ENCODE measurements at regions of chr11 and their contacts with region 1.

Region 1: GRCh38 chr11:57324886-57325734 is at the start of gene TNKS1BP1:
- DNase-seq: peak; percentile 82 to 93 (median 88)
- H3K4me3 ChIP-seq: peak within 1 kb of the TSS; percentile 94
- H3K4me3 Mint-ChIP-seq: peak within 1 kb of the TSS; percentile 88 to 98 (median 94)
- H3K27ac ChIP-seq: peak within 1 kb of the TSS; percentile 89
- H3K27ac Mint-ChIP-seq: peak within 1 kb of the TSS; percentile 92 to 99 (median 97)
- H3K4me1 ChIP-seq: peaks cover 21% of the 10 kb centered on the region
- H3K4me1 Mint-ChIP-seq: peaks cover 31 to 53% (median 45%) of the 10 kb centered on the region in 3 donors
- H3K27me3 ChIP-seq: no peaks in the 10 kb centered on the region
- H3K27me3 Mint-ChIP-seq: peaks cover 0 to 3% of the 10 kb centered on the region in 2 donors
- total RNA-seq, gene TNKS1BP1: 8.7 to 9.6 TPM

Region 2: GRCh38 chr11:57162179-57162898 is 162.8 kb before region 1 on chr11:
- CTCF ChIA-PET with region 1: no interaction called
- POLR2A ChIA-PET with region 1: interaction called, 12 read pairs
- DNase-seq: no peak
- H3K4me3 ChIP-seq: no peak overlapping the region
- H3K4me3 Mint-ChIP-seq: no peak overlapping the region
- H3K27ac ChIP-seq: no peak overlapping the region
- H3K27ac Mint-ChIP-seq: no peak overlapping the region
- H3K4me1 ChIP-seq: no peaks in the 10 kb centered on the region
- H3K4me1 Mint-ChIP-seq: no peaks in the 10 kb centered on the region
- H3K27me3 ChIP-seq: no peaks in the 10 kb centered on the region
- H3K27me3 Mint-ChIP-seq: peaks cover 7 to 15% of the 10 kb centered on the region in 2 donors

Region 3: DNA sequence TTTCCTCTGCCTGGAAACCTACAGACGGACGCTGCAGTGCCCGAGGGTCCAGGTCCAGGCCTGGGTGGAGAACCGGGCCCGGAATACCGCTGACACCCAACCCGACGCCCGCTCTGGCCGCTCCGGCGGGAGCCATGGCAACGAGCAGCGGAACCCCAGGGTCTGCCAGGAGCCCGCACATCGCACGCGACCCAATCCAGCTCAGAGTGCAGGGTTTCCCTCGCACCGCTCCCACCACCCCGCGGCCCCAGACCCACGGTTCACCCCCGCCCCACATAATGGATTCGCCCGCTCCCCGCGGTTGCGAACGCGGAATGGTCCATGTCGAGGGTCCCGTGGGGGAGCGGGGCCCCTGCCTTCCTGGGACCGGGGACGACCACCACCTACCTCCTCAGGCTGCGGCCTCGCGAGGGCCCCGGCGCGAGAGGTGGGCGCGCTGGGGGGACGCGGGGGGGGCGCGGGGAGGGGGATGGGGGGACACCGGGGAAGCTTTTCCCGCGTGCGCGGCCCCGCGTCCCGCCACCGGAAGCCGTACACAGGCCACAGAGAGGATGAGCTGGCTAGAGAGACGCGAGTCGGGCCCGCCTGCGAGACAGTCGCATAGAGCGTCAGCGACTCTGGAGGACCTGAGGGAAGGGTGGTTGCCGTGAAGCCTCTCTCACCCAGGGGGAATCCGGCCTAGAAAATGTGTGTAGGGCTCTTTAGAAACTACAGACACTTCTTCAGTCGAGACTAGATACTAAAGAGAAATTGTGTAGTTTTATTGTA is 10.4 kb after region 1 on chr11 and contains the start of gene SSRP1:
- CTCF ChIA-PET with region 1: interaction called, 20 read pairs
- POLR2A ChIA-PET with region 1: interaction called, 46 read pairs
- DNase-seq: peak; percentile 78 to 92 (median 86)
- H3K4me3 ChIP-seq: peak within 1 kb of the TSS; percentile 76
- H3K4me3 Mint-ChIP-seq: peak within 1 kb of the TSS; percentile 92 to 98 (median 93)
- H3K27ac ChIP-seq: peak within 1 kb of the TSS; percentile 80
- H3K27ac Mint-ChIP-seq: peak within 1 kb of the TSS; percentile 97 to 100 (median 99)
- H3K4me1 ChIP-seq: peaks cover 22% of the 10 kb centered on the region
- H3K4me1 Mint-ChIP-seq: peaks cover 23 to 38% (median 34%) of the 10 kb centered on the region in 3 donors
- H3K27me3 ChIP-seq: no peaks in the 10 kb centered on the region
- H3K27me3 Mint-ChIP-seq: no peaks in the 10 kb centered on the region
- total RNA-seq, gene SSRP1: 308 to 314 TPM